ENCODE measurements at regions of chr1 and their contacts with region 1.

Region 1: DNA sequence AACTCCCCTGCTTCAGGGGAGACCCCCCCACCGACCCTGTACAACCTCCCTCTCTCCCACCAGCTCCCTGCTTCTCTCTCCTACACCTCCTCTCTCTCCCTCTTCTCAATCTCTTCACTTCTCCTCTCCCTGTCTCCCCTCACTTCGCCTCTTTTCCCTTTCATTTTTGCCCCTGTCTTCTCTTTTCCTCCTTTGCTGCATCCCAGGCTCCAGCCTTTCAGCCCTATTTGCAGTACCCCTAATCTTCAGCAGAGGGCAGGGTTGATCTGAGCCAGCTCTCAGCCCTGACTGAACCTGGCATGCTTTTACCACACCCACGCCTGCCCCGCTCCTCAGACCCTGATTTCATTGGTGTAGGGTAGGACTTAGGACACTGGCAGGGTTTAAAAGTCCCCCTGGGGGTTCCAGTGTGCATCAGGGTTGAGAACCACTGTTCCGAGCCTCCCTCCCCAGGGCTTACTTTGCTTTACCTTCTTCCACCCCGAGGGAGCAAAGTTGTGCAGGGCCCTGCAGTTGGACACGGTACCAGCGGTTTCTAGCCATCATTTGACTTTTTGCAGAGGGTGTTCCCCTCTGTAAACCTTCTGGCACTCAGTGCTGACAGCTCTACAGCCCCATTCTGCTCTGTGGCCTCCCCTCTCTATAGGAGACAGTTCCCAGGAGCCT is 67.3 kb upstream of the CNTN2 start:
- DNase-seq: peak; percentile 16 to 63 (median 49)
- ATAC-seq: peak; percentile 74
- H3K4me3 ChIP-seq: no peak overlapping the region
- H3K4me3 Mint-ChIP-seq: no peak overlapping the region
- H3K27ac ChIP-seq: no peak overlapping the region
- H3K27ac Mint-ChIP-seq: no peak overlapping the region
- H3K4me1 ChIP-seq: no peaks in the 10 kb centered on the region
- H3K4me1 Mint-ChIP-seq: no peaks in the 10 kb centered on the region
- H3K27me3 ChIP-seq: no peaks in the 10 kb centered on the region
- H3K27me3 Mint-ChIP-seq: peaks cover 16% of the 10 kb centered on the region
- CTCF ChIP-seq: peak; percentile 75

Region 2: DNA sequence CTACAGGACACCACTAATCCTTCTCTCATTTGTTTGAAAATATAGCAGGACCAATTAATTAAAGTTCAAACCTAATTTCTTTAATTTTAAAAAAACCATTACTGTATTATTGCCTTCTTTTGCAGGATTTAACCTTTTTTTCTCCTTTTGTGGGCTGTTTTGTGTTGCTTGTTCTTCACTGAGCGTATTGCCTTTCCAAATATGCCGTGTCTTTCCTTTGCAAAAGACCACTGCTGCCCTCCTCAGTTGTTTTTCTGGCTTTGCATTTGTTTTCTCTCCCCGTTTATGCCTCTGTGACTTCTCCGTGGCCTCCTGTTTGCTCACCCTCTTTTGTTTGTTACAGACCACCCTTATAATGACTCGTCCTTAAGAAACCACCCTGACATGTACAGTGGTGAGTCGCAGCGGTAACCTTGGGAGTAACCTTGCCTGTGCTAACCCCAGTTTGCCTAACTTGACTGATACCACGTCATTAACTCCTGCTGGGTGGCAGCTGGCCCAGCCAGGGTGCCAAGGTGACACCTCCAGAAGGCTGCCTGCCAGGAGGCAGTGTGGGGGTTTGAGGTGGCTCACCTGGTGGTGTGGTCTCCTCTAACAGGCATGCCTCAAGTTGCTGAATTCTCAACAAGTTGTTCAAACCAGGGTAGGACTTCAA is 13.8 kb before region 1 on chr1:
- CTCF ChIA-PET with region 1: interaction called, 14 read pairs
- POLR2A ChIA-PET with region 1: no interaction called
- intact Hi-C with region 1: no loop called
- DNase-seq: no peak
- ATAC-seq: no peak
- H3K4me3 ChIP-seq: no peak overlapping the region
- H3K4me3 Mint-ChIP-seq: no peak overlapping the region
- H3K27ac ChIP-seq: no peak overlapping the region
- H3K27ac Mint-ChIP-seq: no peak overlapping the region
- H3K4me1 ChIP-seq: no peaks in the 10 kb centered on the region
- H3K4me1 Mint-ChIP-seq: no peaks in the 10 kb centered on the region
- H3K27me3 ChIP-seq: no peaks in the 10 kb centered on the region
- H3K27me3 Mint-ChIP-seq: peaks cover 24% of the 10 kb centered on the region
- CTCF ChIP-seq: no peak

Region 3: GRCh38 chr1:205061665-205062069 is 86.0 kb after region 1 on chr1:
- CTCF ChIA-PET with region 1: interaction called, 15 read pairs
- POLR2A ChIA-PET with region 1: no interaction called
- intact Hi-C with region 1: loop called (anchors 1 kb)
- DNase-seq: peak; percentile 48 to 76 (median 71)
- ATAC-seq: peak; percentile 86
- H3K4me3 ChIP-seq: no peak overlapping the region
- H3K4me3 Mint-ChIP-seq: no peak overlapping the region
- H3K27ac ChIP-seq: no peak overlapping the region
- H3K27ac Mint-ChIP-seq: no peak overlapping the region
- H3K4me1 ChIP-seq: no peaks in the 10 kb centered on the region
- H3K4me1 Mint-ChIP-seq: peaks cover 2% of the 10 kb centered on the region
- H3K27me3 ChIP-seq: no peaks in the 10 kb centered on the region
- H3K27me3 Mint-ChIP-seq: no peaks in the 10 kb centered on the region
- CTCF ChIP-seq: peak; percentile 74

Region 4: DNA sequence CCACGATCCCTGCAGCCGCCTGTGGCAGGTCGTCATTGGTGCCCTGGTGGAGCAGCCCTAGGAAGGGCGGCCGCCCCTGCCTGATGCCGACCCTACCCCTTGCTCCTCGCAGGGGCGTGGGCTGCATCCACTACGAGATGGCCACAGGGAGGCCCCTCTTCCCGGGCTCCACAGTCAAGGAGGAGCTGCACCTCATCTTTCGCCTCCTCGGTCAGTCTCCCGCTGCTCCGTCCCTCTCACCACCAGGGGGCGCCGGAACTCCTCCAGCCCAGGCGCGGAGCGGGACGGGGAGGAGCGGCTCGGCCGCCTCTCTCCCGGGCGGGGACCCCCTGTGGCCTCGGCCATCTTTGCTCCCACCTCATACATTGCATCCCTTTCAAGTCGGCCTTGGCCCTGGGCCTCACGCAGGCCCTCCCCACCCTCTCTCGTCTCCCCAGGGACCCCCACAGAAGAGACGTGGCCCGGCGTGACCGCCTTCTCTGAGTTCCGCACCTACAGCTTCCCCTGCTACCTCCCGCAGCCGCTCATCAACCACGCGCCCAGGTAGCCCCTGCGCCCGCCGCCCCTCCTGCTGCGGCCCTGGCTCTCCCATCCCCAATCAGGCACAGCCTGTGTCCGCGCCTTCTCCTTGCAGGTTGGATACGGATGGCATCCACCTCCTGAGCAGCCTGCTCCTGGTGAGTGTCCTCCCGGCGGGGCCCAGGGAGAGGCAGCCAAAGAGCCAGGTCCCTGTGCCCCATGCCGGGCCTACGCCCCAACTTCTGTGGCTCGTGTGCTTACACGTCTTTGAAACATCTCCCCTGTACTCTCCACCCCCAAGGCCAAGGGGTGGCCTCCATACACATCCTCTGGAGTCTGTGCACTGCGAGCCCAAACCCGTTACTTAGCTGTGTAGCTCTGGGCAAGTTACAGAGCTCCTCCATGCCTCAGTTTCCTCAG is 553.5 kb after region 1 on chr1:
- CTCF ChIA-PET with region 1: interaction called, 3 read pairs
- POLR2A ChIA-PET with region 1: no interaction called
- intact Hi-C with region 1: loop called in 1 of 2 experiments (anchors 10 kb)
- DNase-seq: peak; percentile 68 to 92 (median 80)
- ATAC-seq: peak; percentile 90
- H3K4me3 ChIP-seq: peak overlapping the region in 1 of 2 experiments; percentile 26
- H3K4me3 Mint-ChIP-seq: peak overlapping the region; percentile 58
- H3K27ac ChIP-seq: no peak overlapping the region
- H3K27ac Mint-ChIP-seq: no peak overlapping the region
- H3K4me1 ChIP-seq: no peaks in the 10 kb centered on the region
- H3K4me1 Mint-ChIP-seq: peaks cover 5% of the 10 kb centered on the region
- H3K27me3 ChIP-seq: no peaks in the 10 kb centered on the region
- H3K27me3 Mint-ChIP-seq: no peaks in the 10 kb centered on the region
- CTCF ChIP-seq: peak; percentile 90

Measured in CD8-positive, alpha-beta T cell (primary cell).